HAP-1 (cell line): ENCODE measurements at regions of chr1 and their contacts with region 1.

Region 1: GRCh38 chr1:9881838-9882249 is 28.2 kb downstream of the CTNNBIP1 start:
- DNase-seq: no peak
- H3K4me3 ChIP-seq: no peak overlapping the region
- H3K4me1 ChIP-seq: no peaks in the 10 kb centered on the region
- H3K27me3 ChIP-seq: no peaks in the 10 kb centered on the region

Region 2: DNA sequence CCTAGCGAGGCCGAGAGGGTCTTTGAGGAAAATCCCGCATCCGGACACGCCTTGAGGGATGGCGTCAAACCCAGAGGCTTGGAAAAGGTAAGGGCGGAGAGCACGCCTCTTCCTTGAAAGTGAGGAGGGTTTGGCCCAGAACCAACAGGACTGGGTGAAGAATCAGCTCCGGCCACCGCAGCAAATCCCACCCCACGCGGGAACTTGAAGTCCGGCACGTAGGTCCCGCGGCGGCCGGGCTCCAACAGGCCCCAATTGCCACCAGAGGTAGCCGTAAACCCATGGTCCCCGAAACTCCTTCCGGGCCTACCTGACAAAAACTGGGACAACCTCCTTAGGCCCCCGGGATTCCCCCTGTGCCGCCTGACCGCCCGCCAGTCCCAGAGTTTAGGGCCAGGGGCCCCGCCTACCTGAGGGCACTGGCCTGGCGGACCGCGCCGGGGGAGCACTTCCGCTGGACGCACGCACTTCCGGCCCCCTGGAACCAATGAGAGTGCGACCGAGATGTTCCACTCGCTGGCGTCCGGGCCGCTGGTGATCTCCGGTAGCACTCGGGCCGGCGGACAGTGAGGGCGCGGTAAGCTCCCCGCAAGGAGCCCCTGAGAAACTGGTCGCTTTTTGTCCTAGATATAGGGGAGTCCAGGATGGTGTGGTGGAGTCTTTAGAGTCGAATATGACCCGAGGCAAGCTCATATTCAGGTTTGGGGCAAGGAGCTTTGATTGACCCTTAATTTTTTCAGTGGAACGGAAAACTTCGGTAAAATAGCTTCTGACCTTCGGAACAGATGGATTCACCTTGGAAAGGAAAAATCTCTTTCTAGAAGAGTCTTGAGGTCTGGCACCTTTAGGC is 61.3 kb after region 1 on chr1 and contains the starts of genes LZIC and NMNAT1:
- in situ Hi-C with region 1: loop called (anchors 10 kb)
- DNase-seq: peak; percentile 83 to 94
- H3K4me3 ChIP-seq: peak within 1 kb of the TSS; percentile 83
- H3K4me1 ChIP-seq: no peaks in the 10 kb centered on the region
- H3K27me3 ChIP-seq: no peaks in the 10 kb centered on the region